Activated naive CD4-positive, alpha-beta T cell treated with anti-CD3 and anti-CD28 coated beads, Interleukin-2, amount 10 ng/mL, durations not matched to agents 7 days and 5 days (primary cell): ENCODE measurements at regions of chr22 and their contacts with region 1.

Region 1: DNA sequence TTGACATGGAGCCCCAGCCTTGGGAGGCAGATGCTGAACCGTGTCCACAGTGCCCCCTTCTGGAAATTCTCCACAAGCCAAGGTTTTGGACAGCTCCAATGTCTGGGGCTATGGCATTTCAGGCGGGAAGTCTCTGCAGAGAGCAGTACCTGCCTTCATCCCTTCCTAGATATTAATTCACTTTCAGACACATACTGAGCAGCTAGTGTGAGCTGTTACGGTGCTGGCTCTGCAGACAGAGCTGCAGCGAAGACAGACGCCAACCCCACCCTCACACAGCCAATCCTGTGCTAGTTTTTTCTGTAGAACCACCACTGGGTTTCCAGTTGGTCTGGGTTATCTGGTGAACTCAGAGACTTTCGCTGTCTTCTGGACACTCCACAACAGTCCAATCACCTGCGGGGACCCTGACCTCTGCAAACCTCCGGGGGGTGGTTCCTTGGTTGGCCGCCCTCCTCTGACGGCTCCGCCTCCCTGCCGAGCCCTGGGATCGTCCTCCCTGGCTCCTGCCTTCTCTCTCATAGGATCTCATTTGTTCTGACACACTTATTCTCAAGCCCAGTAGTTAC is 9.1 kb downstream of the LMF2 start:
- DNase-seq: peak; percentile 84
- H3K4me3 Mint-ChIP-seq: no peak overlapping the region
- H3K27ac Mint-ChIP-seq: peak overlapping the region; percentile 42
- H3K4me1 Mint-ChIP-seq: peaks cover 3% of the 10 kb centered on the region
- H3K27me3 Mint-ChIP-seq: peaks cover 11% of the 10 kb centered on the region

Region 2: DNA sequence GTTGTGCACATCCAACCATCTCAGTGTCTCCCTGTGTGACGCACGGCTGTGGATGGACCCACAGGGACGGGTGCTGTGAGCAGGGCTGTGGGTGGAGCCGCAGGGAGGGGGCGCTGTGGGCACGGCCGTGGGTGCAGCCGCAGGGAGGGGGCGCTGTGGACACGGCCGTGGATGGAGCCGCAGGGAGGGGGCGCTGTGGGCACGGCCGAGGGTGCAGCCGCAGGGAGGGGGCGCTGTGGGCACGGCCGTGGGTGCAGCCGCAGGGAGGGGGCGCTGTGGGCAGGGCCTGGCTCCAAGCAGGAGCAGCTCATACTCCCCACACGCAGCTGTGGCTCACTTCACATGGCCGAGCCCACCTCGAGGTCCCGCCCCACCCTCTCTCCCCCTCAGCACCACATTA is 222.3 kb before region 1 on chr22:
- CTCF ChIA-PET with region 1: interaction called, 11 read pairs
- DNase-seq: peak; percentile 63
- H3K4me3 Mint-ChIP-seq: no peak overlapping the region
- H3K27ac Mint-ChIP-seq: no peak overlapping the region
- H3K4me1 Mint-ChIP-seq: peaks cover under 1% of the 10 kb centered on the region
- H3K27me3 Mint-ChIP-seq: peaks cover 31% of the 10 kb centered on the region

Region 3: DNA sequence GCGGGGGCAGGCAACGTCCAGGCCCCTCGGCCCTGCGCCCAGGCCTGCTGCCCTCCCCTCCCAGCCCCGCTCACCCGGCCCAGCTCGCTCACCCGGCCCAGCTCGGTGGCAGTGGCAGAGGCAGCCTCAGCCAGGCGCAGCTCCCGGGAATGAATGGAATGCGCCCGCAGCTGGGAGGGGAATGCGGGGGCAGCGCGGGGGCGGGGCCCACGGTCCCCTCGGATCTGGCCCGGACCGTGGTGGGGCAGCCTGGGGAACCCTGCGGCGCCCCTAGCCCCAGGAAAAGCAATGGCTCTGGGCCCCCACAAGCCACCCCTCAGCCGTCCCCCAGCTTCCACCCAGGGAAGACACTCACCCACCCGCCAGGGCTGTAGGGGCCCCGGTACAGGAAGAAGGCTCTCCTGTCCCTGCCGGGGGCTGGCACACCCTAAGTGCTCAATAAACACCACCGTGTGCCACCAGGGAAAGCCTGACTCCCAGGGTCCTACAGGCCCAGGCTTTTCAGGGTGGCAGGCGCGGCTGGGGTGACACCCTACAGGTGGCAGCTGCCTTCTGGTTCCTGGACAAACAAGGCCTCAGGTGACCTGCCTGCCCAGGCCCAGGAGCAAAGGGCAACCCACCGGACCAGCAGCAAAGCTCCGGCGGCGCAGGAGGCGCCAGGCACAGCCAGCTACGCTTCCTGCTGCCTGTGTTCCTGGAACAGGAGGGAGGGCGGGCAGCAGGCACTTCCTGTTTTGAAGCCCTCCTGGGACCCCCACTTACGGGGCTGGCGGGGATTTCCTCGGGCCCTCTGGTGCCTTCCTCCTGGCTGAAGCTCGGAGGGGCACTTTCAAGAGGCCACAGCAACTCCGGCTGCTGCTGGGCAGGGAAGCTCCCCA is 204.7 kb before region 1 on chr22:
- CTCF ChIA-PET with region 1: no interaction called
- DNase-seq: peak; percentile 28
- H3K4me3 Mint-ChIP-seq: peak overlapping the region; percentile 54
- H3K27ac Mint-ChIP-seq: no peak overlapping the region
- H3K4me1 Mint-ChIP-seq: peaks cover 22% of the 10 kb centered on the region
- H3K27me3 Mint-ChIP-seq: peaks cover 67% of the 10 kb centered on the region

Region 4: DNA sequence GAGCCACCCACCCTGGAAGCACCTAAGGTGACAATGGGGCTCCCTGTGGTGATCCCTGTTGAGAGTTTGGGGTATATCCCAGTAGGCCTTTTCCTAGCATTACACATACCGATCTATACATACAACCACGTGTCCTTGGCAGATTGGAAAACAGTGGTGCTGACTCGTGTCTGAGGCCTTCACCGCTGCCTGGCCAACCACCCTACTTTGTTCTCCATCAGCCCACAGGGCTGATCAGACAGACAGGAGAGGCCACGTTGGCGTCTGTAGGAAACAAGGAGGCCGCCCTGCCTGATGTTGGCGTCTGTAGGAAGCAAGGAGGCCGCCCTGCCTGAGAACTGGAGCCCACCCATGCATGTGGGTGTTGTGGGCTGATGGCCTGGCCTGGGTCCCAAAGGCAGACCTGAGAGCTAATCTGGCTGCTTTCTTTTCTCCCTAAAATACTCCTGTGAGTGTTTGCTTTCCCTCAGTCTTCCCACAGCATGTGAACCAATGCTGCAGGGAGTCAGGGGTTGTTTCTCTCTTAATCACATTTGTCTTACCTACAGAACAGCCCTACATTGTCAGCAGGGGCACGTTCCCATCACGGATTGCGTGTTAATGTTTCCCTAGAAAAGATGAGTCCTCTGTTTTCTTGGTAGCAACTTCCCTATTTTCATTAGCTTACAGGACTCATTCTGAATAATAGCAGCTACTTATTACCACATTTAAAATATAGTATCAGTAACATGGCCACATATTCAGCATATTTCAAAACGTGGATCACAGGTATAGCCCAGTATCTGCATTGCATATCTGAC is 80.8 kb before region 1 on chr22:
- CTCF ChIA-PET with region 1: no interaction called
- DNase-seq: no peak
- H3K4me3 Mint-ChIP-seq: no peak overlapping the region
- H3K27ac Mint-ChIP-seq: no peak overlapping the region
- H3K4me1 Mint-ChIP-seq: no peaks in the 10 kb centered on the region
- H3K27me3 Mint-ChIP-seq: no peaks in the 10 kb centered on the region

Region 5: DNA sequence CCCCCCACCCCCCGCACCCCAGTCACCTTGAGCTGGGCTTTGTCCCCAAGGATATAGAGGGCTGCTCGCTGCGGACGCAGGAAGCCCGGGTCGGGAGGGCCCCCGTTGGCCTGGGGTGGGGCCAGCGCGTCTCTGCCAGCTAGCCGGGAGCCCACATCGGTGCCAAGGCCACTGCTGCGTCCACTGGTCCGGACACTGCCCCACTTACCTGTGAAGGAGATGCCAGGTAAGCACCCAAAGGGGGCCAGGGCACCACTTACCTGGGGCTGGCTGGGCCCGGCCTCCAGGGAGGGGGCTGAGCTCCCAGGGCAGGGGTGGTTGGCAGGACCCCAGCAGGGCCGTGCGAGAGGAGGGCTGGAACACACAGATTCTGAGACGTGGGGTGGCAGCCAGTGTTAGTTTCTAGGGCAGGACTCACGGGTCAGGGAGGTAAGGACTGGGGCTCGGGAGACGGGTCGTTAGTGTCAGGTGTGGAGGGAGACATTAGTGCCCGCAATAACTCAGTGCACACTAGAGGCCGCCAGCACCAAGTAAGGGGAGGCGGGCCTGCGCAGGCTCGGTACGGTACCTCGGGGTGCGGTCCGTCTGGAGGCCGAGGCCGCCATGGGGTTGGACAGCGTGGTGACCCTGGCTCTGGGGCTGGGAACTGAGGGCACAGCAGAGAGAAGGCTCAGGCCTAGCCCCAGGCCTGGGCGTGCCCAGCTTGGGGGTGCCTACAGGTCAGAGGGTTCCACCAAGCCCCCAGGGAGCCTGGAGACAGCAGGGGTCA is 41.8 kb before region 1 on chr22:
- CTCF ChIA-PET with region 1: interaction called, 12 read pairs
- DNase-seq: no peak
- H3K4me3 Mint-ChIP-seq: no peak overlapping the region
- H3K27ac Mint-ChIP-seq: no peak overlapping the region
- H3K4me1 Mint-ChIP-seq: peaks cover 3% of the 10 kb centered on the region
- H3K27me3 Mint-ChIP-seq: no peaks in the 10 kb centered on the region

Region 6: GRCh38 chr22:50469377-50470305 is 28.8 kb before region 1 on chr22:
- CTCF ChIA-PET with region 1: interaction called, 21 read pairs
- DNase-seq: peak; percentile 99
- H3K4me3 Mint-ChIP-seq: peak overlapping the region; percentile 69
- H3K27ac Mint-ChIP-seq: peak overlapping the region; percentile 95
- H3K4me1 Mint-ChIP-seq: peaks cover 75% of the 10 kb centered on the region
- H3K27me3 Mint-ChIP-seq: no peaks in the 10 kb centered on the region

Region 7: DNA sequence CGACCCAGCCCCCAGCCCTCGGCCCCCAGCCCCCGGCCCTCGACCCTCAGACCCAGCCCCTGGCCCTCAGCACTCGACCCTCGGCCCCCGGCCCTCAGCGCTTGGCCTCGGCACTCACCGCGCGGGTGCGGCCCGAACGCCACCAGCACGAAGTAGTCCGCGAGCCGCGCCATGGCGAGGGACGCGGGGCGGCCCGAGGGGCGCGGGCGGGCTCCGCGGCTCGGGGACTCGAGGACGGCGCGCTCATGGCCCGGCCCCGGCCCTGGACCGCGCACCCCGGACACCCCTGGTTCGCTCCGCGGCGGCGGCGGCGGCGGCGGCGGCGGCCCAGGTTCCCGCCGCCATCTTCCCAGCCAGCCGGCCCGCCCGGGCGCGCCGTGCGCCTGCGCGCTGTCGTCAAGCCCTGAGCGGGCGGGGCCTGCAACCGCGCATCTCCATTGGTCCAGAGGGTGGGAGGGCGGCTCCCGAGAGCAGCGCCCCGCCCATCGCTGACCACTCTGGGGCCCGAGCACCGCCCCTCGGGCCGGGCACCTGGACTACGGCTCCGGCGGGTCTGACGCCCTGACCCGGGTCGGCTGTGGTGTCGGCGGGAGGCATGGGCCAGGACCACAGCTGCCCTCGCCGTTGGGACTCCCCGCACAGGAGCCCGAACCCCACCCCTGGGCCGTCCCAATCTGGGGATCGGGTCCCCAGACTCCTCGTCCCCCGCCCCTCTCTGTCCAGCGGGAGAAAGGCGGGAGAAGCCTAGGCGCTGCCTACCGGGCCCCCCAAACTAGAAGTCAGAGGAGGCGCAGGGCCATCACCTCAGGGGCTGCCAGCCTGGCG is 23.5 kb before region 1 on chr22 and contains the start of gene SBF1:
- CTCF ChIA-PET with region 1: interaction called, 21 read pairs
- DNase-seq: peak; percentile 92
- H3K4me3 Mint-ChIP-seq: peak within 1 kb of the TSS; percentile 86
- H3K27ac Mint-ChIP-seq: peak within 1 kb of the TSS; percentile 91
- H3K4me1 Mint-ChIP-seq: peaks cover 57% of the 10 kb centered on the region
- H3K27me3 Mint-ChIP-seq: peaks cover 33% of the 10 kb centered on the region

Region 8: GRCh38 chr22:50485201-50486131 is 12.9 kb before region 1 on chr22:
- CTCF ChIA-PET with region 1: interaction called, 10 read pairs
- DNase-seq: no peak
- H3K4me3 Mint-ChIP-seq: no peak overlapping the region
- H3K27ac Mint-ChIP-seq: no peak overlapping the region
- H3K4me1 Mint-ChIP-seq: peaks cover 10% of the 10 kb centered on the region
- H3K27me3 Mint-ChIP-seq: peaks cover 46% of the 10 kb centered on the region